ENCODE measurements at regions of chr18 and their contacts with region 1.

Region 1: GRCh38 chr18:54671291-54671881 is 80.3 kb downstream of the DYNAP start:
- DNase-seq: no peak
- ATAC-seq: no peak
- H3K4me3 ChIP-seq: no peak overlapping the region
- H3K27ac ChIP-seq: no peak overlapping the region
- H3K4me1 ChIP-seq: no peaks in the 10 kb centered on the region
- H3K27me3 ChIP-seq: no peaks in the 10 kb centered on the region
- CTCF ChIP-seq: peak; percentile 51

Region 2: DNA sequence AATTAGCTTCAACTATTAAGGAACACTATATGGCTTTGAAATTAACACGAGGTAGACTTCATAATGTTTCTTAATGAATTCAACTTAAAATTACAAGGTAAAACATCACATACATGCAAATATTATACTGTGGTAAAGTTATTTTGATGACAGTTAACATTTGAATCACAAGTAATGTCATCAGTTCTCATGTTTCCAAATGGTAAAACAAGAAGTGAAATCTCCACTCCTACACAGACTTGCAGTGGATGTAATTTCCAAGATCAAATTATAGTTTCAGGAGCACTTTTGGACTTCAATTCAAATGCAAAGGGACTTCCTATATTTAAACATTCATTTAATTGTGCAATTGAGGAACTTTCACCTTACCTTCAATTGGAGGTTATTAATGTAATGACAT is 274.6 kb before region 1 on chr18:
- intact Hi-C with region 1: loop called in 1 of 2 experiments (anchors 5 kb)
- DNase-seq: no peak
- ATAC-seq: no peak
- H3K4me3 ChIP-seq: no peak overlapping the region
- H3K27ac ChIP-seq: no peak overlapping the region
- H3K4me1 ChIP-seq: no peaks in the 10 kb centered on the region
- H3K27me3 ChIP-seq: no peaks in the 10 kb centered on the region
- CTCF ChIP-seq: no peak

Region 3: DNA sequence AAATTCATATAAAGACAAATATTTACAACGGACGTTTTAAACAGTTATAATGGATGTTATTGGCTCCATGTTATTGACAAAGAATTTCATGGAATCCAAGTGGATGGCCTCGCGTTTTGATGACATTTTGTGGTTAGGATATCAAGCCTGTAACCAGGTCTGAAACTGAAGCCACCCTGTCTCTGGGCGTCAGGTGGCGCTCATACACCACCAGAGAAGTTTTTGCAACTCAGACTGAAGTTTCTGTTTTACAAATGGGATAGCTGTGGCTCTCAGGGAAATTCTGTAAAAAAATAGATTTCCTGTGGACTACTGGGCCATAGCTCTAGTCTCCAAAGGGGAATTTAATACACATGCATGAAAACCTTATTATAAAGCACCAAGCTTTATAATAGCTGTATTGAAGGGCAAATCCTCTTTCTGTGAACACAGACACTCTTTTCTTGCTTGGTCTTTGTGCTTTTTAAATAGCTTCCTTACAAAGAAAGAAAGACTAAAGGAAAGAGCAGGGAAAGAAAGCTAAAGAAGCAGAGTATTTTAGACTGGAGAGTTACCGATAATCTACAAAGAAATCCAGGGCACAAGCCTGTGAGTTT is 227.0 kb before region 1 on chr18:
- intact Hi-C with region 1: loop called (anchors 2 to 5 kb)
- DNase-seq: peak in 1 of 2 donors; percentile 19
- ATAC-seq: peak in 1 of 4 donors; percentile 56
- H3K4me3 ChIP-seq: no peak overlapping the region
- H3K27ac ChIP-seq: no peak overlapping the region
- H3K4me1 ChIP-seq: no peaks in the 10 kb centered on the region
- H3K27me3 ChIP-seq: peaks cover 0 to 3% (median 2%) of the 10 kb centered on the region in 3 donors
- CTCF ChIP-seq: peak; percentile 47